ENCODE measurements at regions of chr17 and their contacts with region 1.

Region 1: DNA sequence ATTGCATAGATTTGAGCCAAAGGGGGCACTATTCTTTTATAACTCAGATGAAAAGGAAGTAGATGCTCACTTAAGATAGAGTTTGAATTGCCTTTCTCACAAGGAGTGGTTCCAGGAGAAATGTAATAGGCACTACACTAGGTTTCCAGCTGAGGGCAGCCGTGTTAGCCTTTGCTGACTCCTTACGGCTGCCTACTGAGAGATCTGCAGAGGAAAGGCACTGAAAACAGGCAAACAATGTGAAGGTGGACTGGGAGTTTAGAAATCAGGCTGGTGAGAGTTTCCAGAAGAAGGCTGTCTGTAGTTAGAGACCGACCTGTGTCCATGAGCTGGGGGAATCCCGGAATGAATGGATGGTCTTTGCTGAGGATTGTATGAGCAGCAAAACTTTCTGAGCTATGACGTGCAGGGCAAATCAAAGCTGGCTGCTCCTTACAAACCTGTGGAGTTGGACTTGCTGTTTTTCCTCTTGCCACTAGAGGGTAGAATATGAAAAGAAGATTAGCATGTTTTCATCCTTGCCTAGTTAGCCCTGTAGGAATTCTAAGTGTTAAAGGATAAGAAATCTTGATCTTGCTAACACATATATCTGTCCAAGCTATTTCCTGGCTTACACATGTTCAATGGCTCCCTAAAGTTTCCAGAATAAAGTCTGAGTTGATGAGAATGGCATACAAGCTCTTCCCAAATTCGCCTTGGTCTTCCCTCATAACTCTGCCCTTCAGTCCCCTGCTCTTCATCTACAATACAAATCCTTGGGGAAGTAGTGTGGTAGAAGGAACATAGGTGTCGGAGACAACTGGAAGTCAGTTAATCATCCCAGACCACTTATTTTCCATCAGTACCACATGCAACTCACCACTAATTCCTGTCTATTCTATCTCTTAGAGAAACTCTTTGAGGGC is 20.1 kb upstream of the TAOK1 start:
- DNase-seq: peak; percentile 68
- ATAC-seq: peak; percentile 94
- H3K4me3 Mint-ChIP-seq: no peak overlapping the region
- H3K27ac Mint-ChIP-seq: no peak overlapping the region
- H3K4me1 Mint-ChIP-seq: peaks cover 7% of the 10 kb centered on the region
- H3K27me3 Mint-ChIP-seq: no peaks in the 10 kb centered on the region
- CTCF ChIP-seq: peak; percentile 69

Region 2: DNA sequence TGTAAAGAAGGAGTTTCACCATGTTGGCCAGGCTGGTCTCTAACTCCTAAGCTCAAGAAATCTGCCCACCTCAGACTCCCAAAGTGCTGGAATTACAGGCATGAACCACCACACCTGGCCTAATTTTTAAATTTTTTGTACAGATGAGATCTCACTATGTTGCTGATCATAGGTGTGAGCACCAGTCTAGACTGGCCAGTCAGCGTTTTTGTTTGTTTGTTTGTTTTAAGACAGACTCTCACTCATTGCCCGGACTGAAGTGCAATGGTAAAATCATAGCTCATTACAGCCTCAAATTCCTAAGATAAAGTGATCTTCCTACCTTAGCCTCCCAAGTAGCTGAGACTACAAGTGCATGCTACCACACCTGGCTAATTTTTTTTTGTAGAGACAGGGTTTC is 17.9 kb before region 1 on chr17:
- CTCF ChIA-PET with region 1: interaction called, 12 read pairs
- POLR2A ChIA-PET with region 1: no interaction called
- DNase-seq: no peak
- ATAC-seq: no peak
- H3K4me3 Mint-ChIP-seq: no peak overlapping the region
- H3K27ac Mint-ChIP-seq: no peak overlapping the region
- H3K4me1 Mint-ChIP-seq: no peaks in the 10 kb centered on the region
- H3K27me3 Mint-ChIP-seq: no peaks in the 10 kb centered on the region
- CTCF ChIP-seq: no peak

Region 3: DNA sequence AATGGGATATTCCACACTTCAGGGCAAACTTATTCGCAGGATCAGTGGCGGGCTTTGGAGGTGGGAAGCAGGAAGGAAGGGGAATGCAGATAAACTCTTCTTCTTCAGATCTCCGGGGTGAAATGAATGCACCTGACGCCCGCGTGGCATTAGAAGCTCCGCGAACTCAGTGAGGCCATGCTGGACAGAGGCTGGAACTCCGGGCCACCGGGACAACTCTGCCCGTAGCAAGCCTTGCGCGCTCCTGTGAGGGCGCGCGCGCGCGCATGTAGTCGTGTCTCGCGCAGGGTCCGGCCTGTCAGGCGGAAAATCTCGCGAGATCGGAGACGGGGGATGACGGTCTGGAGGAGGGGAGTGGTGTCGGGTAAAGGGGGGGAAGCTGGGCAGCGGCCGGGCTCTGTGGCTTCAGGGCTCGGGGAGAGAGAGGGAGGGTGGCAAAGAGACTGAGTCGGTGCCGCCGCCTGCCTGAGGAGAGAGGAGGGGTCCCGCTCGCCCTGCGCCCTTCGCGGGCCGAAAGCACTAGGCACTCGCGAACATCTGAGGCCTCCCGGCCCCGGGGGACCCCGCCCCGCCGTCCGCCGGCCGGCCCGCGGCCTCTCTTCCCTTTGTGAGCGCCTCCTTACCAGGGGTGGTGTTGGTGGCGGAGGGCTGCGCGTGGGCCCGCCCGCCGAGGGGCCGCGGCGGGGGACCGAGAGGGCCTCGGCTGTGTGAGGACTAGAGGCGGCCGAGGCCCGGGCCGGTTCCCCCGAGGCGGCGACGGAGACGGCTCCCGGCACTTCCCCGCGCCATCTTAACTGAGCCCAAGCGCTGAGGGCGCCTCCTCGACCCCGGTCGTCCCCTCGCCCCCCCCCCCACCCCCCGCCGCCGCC is 20.1 kb after region 1 on chr17 and contains the start of gene TAOK1:
- CTCF ChIA-PET with region 1: interaction called, 63 read pairs
- POLR2A ChIA-PET with region 1: no interaction called
- DNase-seq: peak; percentile 99
- ATAC-seq: peak; percentile 93
- H3K4me3 Mint-ChIP-seq: peak within 1 kb of the TSS; percentile 94
- H3K27ac Mint-ChIP-seq: peak within 1 kb of the TSS; percentile 96
- H3K4me1 Mint-ChIP-seq: peaks cover 32% of the 10 kb centered on the region
- H3K27me3 Mint-ChIP-seq: no peaks in the 10 kb centered on the region
- CTCF ChIP-seq: no peak
- total RNA-seq, gene TAOK1: 86.4 to 87.1 TPM (median 86.5 TPM) in 3 replicates

Region 4: GRCh38 chr17:29549177-29549923 is 179.3 kb after region 1 on chr17:
- CTCF ChIA-PET with region 1: interaction called, 11 read pairs
- POLR2A ChIA-PET with region 1: no interaction called
- DNase-seq: no peak
- ATAC-seq: no peak
- H3K4me3 Mint-ChIP-seq: no peak overlapping the region
- H3K27ac Mint-ChIP-seq: no peak overlapping the region
- H3K4me1 Mint-ChIP-seq: peaks cover 18% of the 10 kb centered on the region
- H3K27me3 Mint-ChIP-seq: no peaks in the 10 kb centered on the region
- CTCF ChIP-seq: no peak

Region 5: GRCh38 chr17:29568331-29569244 is 198.5 kb after region 1 on chr17 and contains the start of gene TP53I13:
- CTCF ChIA-PET with region 1: interaction called, 56 read pairs
- POLR2A ChIA-PET with region 1: no interaction called
- DNase-seq: peak; percentile 89
- ATAC-seq: peak; percentile 50
- H3K4me3 Mint-ChIP-seq: peak within 1 kb of the TSS; percentile 91
- H3K27ac Mint-ChIP-seq: peak within 1 kb of the TSS; percentile 95
- H3K4me1 Mint-ChIP-seq: peaks cover 16% of the 10 kb centered on the region
- H3K27me3 Mint-ChIP-seq: peaks cover 44% of the 10 kb centered on the region
- CTCF ChIP-seq: no peak
- total RNA-seq, gene TP53I13: 33.1 to 41.9 TPM (median 36.7 TPM) in 3 replicates

Measured in WTC11 (cell line).